ENCODE measurements at regions of chr3 and their contacts with region 1.

Region 1: GRCh38 chr3:72782521-72782920 is 65.7 kb downstream of the SHQ1 start:
- DNase-seq: no peak
- ATAC-seq: no peak
- H3K4me3 ChIP-seq: no peak overlapping the region
- H3K4me3 Mint-ChIP-seq: no peak overlapping the region
- H3K27ac ChIP-seq: no peak overlapping the region
- H3K27ac Mint-ChIP-seq: peak overlapping the region; percentile 3
- H3K4me1 ChIP-seq: no peaks in the 10 kb centered on the region
- H3K4me1 Mint-ChIP-seq: peaks cover 12% of the 10 kb centered on the region
- H3K27me3 ChIP-seq: no peaks in the 10 kb centered on the region
- H3K27me3 Mint-ChIP-seq: no peaks in the 10 kb centered on the region
- CTCF ChIP-seq: no peak

Region 2: GRCh38 chr3:72738752-72739530 is 43.6 kb before region 1 on chr3:
- CTCF ChIA-PET with region 1: no interaction called
- POLR2A ChIA-PET with region 1: no interaction called
- intact Hi-C with region 1: loop called in 1 of 2 experiments (anchors 5 kb)
- DNase-seq: peak; percentile 50 to 85 (median 73)
- ATAC-seq: peak; percentile 92
- H3K4me3 ChIP-seq: peak overlapping the region; percentile 56 to 67
- H3K4me3 Mint-ChIP-seq: peak overlapping the region; percentile 89
- H3K27ac ChIP-seq: peak overlapping the region; percentile 69 to 73
- H3K27ac Mint-ChIP-seq: peak overlapping the region; percentile 97
- H3K4me1 ChIP-seq: peaks cover 19% of the 10 kb centered on the region
- H3K4me1 Mint-ChIP-seq: peaks cover 31% of the 10 kb centered on the region
- H3K27me3 ChIP-seq: no peaks in the 10 kb centered on the region
- H3K27me3 Mint-ChIP-seq: no peaks in the 10 kb centered on the region
- CTCF ChIP-seq: no peak

Measured in CD8-positive, alpha-beta T cell (primary cell).